ENCODE measurements at regions of chr5 and their contacts with region 1.

Region 1: GRCh38 chr5:64634997-64635686 is 55.2 kb upstream of the SHISAL2B start:
- DNase-seq: peak; percentile 31
- H3K4me3 ChIP-seq: no peak overlapping the region
- H3K27ac ChIP-seq: no peak overlapping the region
- H3K4me1 ChIP-seq: peaks cover 4% of the 10 kb centered on the region
- H3K27me3 ChIP-seq: peaks cover 12% of the 10 kb centered on the region

Region 2: DNA sequence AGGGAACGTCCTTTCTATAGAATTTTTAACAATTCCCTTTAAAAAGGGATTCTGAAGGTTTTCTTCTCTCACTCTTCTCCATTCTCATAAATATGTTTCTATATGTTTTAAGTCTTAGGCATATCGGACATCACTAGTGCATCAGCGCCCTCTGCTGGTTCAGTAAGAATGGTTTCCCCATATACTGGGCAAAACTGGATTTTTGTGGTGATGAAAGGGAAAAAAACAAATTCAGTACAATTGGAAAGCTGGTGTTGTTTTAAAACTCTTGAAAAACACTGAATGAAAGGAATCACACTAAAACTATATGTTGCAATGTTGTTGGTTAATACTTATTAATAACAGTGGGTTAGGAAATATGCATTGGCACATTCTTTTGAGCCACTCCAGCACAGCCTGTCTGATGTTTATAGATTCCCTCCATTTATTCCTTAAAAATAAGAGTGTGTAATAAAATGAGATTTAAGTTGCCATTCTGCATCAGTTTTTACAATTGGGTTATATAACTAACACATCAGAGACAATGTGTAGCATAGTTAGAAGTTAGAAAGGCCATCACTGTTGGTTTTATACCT is 149.4 kb after region 1 on chr5:
- in situ Hi-C with region 1: loop called (anchors 10 kb)
- DNase-seq: peak; percentile 88
- H3K4me3 ChIP-seq: no peak overlapping the region
- H3K27ac ChIP-seq: no peak overlapping the region
- H3K4me1 ChIP-seq: peaks cover 3% of the 10 kb centered on the region; the same call in 1 of the 2 replicates
- H3K27me3 ChIP-seq: no peaks in the 10 kb centered on the region